Activated CD4-positive, alpha-beta T cell treated with anti-CD3 and anti-CD28 coated beads, Interleukin-2, amount 10 ng/mL, durations not matched to agents 7 days and 5 days (primary cell): ENCODE measurements at regions of chr1 and their contacts with region 1.

Region 1: GRCh38 chr1:84781946-84782771 is 91.9 kb upstream of the SSX2IP start:
- DNase-seq: peak; percentile 78
- H3K4me3 Mint-ChIP-seq: peak overlapping the region; percentile 61
- H3K27ac Mint-ChIP-seq: peak overlapping the region; percentile 22
- H3K4me1 Mint-ChIP-seq: peaks cover 34% of the 10 kb centered on the region
- H3K27me3 Mint-ChIP-seq: peaks cover 8% of the 10 kb centered on the region

Region 2: GRCh38 chr1:84936116-84936810 is 154.1 kb after region 1 on chr1:
- CTCF ChIA-PET with region 1: interaction called, 12 read pairs
- POLR2A ChIA-PET with region 1: no interaction called
- DNase-seq: peak; percentile 58
- H3K4me3 Mint-ChIP-seq: no peak overlapping the region
- H3K27ac Mint-ChIP-seq: no peak overlapping the region
- H3K4me1 Mint-ChIP-seq: peaks cover 7% of the 10 kb centered on the region
- H3K27me3 Mint-ChIP-seq: no peaks in the 10 kb centered on the region